Mammary epithelial cell (primary cell): ENCODE measurements at regions of chr9 and their contacts with region 1.

Region 1: GRCh38 chr9:133782157-133783130 is 44.3 kb upstream of the SARDH start:
- DNase-seq: peak; percentile 22
- H3K4me3 ChIP-seq: no peak overlapping the region
- H3K27ac ChIP-seq: no peak overlapping the region
- H3K4me1 ChIP-seq: no peaks in the 10 kb centered on the region
- H3K27me3 ChIP-seq: no peaks in the 10 kb centered on the region
- CTCF ChIP-seq: peak; percentile 80 to 83

Region 2: DNA sequence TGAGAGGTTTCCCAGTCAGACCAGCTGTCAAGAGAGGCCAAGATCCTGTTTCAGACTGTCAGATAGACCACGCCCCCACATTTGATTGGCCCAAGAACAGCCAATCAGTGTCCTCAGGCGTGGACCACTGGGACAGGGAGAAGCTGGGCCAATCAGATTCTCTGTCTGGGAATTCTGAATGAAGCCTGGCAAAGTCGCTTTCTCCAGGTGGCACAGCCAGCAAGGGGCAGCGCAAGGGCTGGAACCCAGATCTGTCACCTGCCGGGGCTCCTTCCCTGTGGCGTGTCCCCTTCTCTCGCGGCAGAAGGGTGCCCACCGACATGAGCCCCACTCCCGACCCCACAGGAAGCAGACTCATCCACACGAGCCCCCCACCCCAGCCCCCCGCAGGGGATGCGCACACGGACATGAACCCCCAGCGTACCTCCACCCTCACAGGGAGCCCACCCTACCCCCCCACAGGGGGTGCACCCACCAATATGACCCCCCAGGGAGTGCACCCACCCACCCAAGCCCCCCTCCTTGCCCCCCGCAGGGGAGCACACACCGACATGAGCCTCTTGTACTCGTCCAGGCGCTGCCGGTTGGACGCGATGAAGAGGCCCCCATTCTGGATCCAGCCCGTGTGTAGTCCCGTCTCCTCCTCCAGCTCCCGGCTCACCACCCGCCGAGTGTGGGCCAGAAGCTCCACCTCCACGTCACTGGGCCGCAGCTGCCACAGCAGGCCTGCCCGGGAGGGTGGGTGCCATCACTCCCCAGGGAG is 50.4 kb before region 1 on chr9:
- CTCF ChIA-PET with region 1: interaction called, 9 read pairs
- dilution Hi-C with region 1: loop called (anchors 5 kb)
- in situ Hi-C with region 1: no loop called
- intact Hi-C with region 1: no loop called
- DNase-seq: peak; percentile 21
- H3K4me3 ChIP-seq: no peak overlapping the region
- H3K27ac ChIP-seq: no peak overlapping the region
- H3K4me1 ChIP-seq: peaks cover under 1% of the 10 kb centered on the region
- H3K27me3 ChIP-seq: no peaks in the 10 kb centered on the region
- CTCF ChIP-seq: no peak